ENCODE measurements at regions of chr17 and their contacts with region 1.

Region 1: GRCh38 chr17:63919311-63919723 is 678 bp upstream of the GH1 start:
- DNase-seq: peak; percentile 83
- H3K4me3 Mint-ChIP-seq: no peak overlapping the region
- H3K27ac Mint-ChIP-seq: no peak overlapping the region
- H3K4me1 Mint-ChIP-seq: peaks cover 9% of the 10 kb centered on the region
- H3K27me3 Mint-ChIP-seq: peaks cover 61% of the 10 kb centered on the region

Region 2: GRCh38 chr17:63798572-63799106 is 120.7 kb before region 1 on chr17:
- CTCF ChIA-PET with region 1: no interaction called
- DNase-seq: no peak
- H3K4me3 Mint-ChIP-seq: no peak overlapping the region
- H3K27ac Mint-ChIP-seq: no peak overlapping the region
- H3K4me1 Mint-ChIP-seq: peaks cover 2% of the 10 kb centered on the region
- H3K27me3 Mint-ChIP-seq: no peaks in the 10 kb centered on the region

Region 3: GRCh38 chr17:63904316-63904715 is 15.0 kb before region 1 on chr17:
- CTCF ChIA-PET with region 1: interaction called, 14 read pairs
- DNase-seq: no peak
- H3K4me3 Mint-ChIP-seq: no peak overlapping the region
- H3K27ac Mint-ChIP-seq: no peak overlapping the region
- H3K4me1 Mint-ChIP-seq: peaks cover 2% of the 10 kb centered on the region
- H3K27me3 Mint-ChIP-seq: peaks cover 58% of the 10 kb centered on the region

Region 4: DNA sequence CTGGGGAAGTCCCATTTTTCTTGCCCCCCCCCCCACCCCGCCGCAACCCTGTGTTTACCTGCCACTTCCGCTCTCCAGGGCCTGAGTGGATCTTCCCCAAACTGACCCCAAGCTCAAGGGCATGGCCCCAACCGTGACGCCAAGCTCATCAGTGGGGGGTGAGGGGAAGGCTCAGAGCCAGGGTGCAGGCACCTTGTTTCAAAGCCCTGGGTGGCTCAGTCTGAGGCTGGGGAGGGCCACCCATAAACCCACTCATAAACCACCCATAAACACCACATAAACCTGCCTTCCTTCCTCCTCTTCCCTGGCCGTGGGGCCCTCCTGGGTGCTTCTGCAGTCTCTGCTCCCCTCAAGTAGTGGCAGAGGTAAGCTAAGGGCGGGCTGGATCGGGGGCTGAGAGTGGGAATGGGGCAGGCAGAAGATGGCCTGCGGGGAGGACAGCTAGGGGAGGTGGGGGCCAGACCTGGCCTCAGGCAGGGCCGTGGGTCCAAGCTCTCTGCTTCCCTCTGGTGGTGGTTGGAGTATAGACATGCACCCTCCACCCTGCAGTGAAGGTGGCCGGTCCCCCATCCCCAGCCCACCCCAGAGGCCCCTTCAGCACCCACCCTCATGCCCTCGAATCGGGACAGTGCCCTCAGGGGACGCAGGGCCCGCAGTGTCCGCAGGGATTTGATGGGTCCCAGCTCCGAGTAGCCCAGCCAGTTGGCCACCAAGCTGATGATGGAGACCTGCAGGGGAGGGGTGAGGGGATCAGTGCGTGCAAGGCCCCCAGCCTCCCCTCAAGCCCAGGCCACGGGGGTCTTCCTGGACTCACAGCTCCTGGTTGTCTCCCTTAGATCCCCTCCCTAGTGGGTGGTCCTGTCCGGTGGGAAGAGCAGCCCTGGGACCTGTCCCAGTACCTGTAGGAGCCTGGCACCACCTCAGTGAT is 27.4 kb after region 1 on chr17:
- CTCF ChIA-PET with region 1: interaction called, 62 read pairs
- DNase-seq: peak; percentile 72
- H3K4me3 Mint-ChIP-seq: peak overlapping the region; percentile 54
- H3K27ac Mint-ChIP-seq: peak overlapping the region; percentile 85
- H3K4me1 Mint-ChIP-seq: peaks cover 23% of the 10 kb centered on the region
- H3K27me3 Mint-ChIP-seq: peaks cover 81% of the 10 kb centered on the region

Region 5: DNA sequence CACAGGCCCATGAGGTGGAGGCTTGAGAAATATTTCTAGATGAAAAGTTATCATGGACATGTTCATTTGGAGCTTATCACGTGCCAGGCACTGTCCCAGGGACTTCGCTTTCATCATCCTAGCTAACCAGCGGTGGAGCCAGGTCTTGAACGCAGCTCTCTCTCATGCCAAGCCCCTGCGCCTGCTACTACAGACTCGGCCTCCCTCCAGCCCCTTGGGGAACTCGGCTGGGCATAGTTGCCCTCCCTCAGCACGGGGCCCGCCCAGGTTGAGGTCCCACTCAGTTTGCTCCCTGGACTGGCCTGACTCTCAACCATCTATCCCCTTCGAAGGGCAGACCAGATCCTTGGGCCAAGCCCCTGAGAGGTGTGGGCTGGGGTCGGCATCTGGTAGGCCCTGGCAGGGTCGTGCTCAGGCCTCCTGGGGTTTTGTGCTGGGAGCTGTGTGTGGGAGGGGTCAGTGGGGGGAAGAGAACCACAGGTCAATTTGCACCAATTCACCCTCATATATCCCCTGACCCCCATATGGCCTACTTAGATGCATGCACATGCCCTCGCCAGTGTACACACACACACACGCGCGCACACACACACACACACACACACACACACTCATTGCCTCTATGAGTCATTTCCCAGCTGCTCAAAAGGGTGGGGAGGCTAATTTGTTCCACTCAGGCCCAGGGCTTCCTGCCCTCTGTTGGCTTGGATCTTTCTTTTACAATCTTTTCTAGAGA is 65.5 kb after region 1 on chr17:
- CTCF ChIA-PET with region 1: interaction called, 83 read pairs
- DNase-seq: peak; percentile 76
- H3K4me3 Mint-ChIP-seq: peak overlapping the region; percentile 9
- H3K27ac Mint-ChIP-seq: peak overlapping the region; percentile 78
- H3K4me1 Mint-ChIP-seq: peaks cover 29% of the 10 kb centered on the region
- H3K27me3 Mint-ChIP-seq: peaks cover 12% of the 10 kb centered on the region

Region 6: DNA sequence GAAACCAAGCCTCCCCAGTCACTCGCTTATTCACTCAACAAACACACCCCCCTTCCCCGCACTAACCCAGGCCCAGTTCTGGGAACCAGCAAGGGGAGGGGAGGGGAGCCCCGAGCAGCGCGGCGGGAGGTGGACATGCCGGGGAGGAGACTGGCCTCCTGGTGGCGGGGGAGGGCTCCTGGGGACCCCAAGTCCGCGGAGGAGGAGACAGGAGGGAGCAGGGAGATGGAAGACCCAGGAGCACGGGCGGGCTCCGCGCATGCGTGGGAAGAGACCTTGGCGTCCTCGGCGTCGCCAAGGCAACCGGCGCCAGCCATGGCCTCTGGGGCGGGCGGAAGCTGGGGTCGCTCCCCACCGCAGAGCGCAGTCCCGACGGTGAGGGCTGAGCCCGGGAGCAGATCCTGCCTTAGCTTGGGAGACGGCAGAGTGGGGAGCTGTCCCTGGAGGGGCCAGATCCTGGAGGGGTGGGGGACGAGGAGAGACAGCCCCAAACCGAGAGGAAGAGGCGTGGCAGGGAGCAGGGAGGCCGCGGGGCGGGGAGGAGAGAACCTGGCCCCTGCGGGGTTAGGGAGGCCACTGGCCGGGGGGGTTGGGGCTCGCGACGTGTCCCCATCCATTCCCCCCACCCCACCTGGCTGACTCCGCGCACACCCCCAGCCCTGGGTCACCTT is 78.9 kb after region 1 on chr17 and contains the start of gene PRR29:
- CTCF ChIA-PET with region 1: interaction called, 13 read pairs
- DNase-seq: peak; percentile 86
- H3K4me3 Mint-ChIP-seq: peak within 1 kb of the TSS; percentile 90
- H3K27ac Mint-ChIP-seq: peak within 1 kb of the TSS; percentile 71
- H3K4me1 Mint-ChIP-seq: peaks cover 58% of the 10 kb centered on the region
- H3K27me3 Mint-ChIP-seq: peaks cover 50% of the 10 kb centered on the region

Measured in activated naive CD4-positive, alpha-beta T cell treated with anti-CD3 and anti-CD28 coated beads, Interleukin-2, amount 10 ng/mL, durations not matched to agents 7 days and 5 days (primary cell).